ENCODE measurements at regions of chr2 and their contacts with region 1.

Region 1: DNA sequence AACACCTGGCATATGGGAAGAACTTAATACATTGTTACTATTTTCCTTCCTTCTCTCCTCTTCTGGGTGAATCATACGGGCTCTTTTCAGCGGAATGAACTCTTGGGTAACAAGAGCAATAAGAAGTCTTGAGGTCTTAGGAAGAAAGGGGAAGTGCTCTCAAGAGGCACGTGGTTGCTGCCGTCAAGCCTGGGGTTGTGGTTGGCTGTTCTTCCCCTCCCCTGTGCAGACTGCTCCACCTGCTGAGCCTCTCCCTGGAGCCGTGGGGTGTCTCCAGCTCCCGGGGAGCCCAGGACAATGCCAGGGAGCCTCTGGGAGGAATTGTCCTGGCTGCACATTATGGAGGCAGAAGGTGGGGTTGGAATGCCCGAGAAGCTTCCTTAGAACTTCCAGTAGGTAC is 19.4 kb downstream of the TOGARAM2 start:
- H3K4me3 Mint-ChIP-seq: no peak overlapping the region
- H3K27ac Mint-ChIP-seq: peak overlapping the region; percentile 75
- H3K4me1 Mint-ChIP-seq: peaks cover 65% of the 10 kb centered on the region
- H3K27me3 Mint-ChIP-seq: peaks cover 3% of the 10 kb centered on the region

Region 2: GRCh38 chr2:29066271-29066860 is 65.9 kb after region 1 on chr2:
- intact Hi-C with region 1: no loop called
- H3K4me3 Mint-ChIP-seq: no peak overlapping the region
- H3K27ac Mint-ChIP-seq: no peak overlapping the region
- H3K4me1 Mint-ChIP-seq: peaks cover 18% of the 10 kb centered on the region
- H3K27me3 Mint-ChIP-seq: no peaks in the 10 kb centered on the region

Region 3: DNA sequence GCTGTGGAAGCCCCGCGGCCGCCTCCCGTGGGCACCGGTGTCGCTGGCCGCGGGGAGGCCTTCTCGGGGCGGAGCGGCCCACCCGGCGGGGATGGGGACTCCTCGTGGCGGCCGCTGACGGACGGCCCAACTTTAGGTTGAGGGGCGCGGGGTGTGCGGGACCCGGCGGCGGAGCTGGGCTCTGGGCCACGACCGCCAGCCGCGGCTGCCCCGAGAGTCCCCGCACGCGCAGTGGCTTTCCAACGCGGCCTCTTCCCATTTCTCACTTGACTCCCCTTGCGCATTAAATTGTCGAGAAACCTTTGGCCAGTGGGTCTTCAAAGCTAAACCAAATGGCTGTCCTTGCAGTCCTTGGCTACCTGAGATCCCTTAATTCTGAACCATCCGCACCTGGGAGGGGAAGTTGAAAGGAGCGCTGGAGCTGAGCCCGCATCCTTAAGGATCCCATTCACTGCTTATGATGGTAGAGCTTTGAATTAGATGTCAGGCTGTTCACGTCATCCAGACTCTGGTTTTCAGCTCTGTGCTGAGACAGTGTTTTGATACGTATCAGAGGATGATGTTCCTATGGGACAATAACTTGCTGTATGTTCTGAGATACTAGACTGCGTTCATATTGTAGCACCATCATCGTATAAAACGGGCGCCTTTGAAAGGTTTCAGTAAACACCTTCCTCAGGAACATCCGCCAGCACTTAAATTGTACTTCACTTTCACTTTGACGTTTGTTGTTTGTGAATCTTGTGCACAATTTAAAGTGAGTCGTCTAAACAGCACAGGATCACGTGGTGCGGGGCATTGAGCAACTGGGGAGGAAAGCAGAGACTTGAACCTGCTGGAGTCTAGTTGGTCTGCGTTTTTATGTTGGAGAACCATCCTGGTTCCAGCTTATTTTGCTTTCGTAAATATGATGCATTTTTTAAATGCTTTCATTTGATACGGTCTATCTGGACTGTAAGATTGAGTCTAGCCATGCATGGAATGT is 115.6 kb after region 1 on chr2:
- intact Hi-C with region 1: loop called (anchors 5 kb)
- H3K4me3 Mint-ChIP-seq: peak overlapping the region; percentile 77
- H3K27ac Mint-ChIP-seq: peak overlapping the region; percentile 87
- H3K4me1 Mint-ChIP-seq: peaks cover 45% of the 10 kb centered on the region
- H3K27me3 Mint-ChIP-seq: no peaks in the 10 kb centered on the region

Region 4: GRCh38 chr2:29309090-29310029 is 308.9 kb after region 1 on chr2:
- intact Hi-C with region 1: no loop called
- H3K4me3 Mint-ChIP-seq: no peak overlapping the region
- H3K27ac Mint-ChIP-seq: no peak overlapping the region
- H3K4me1 Mint-ChIP-seq: peaks cover 22% of the 10 kb centered on the region
- H3K27me3 Mint-ChIP-seq: peaks cover 35% of the 10 kb centered on the region

Measured in dendritic cell treated with granulocyte-macrophage colony-stimulating factor and Interleukin-4, amounts not matched to agents 40 ng/mL and 50 ng/mL, for 4 days (primary cell).